PC-9 (cell line): ENCODE measurements at regions of chr2 and their contacts with region 1.

Region 1: DNA sequence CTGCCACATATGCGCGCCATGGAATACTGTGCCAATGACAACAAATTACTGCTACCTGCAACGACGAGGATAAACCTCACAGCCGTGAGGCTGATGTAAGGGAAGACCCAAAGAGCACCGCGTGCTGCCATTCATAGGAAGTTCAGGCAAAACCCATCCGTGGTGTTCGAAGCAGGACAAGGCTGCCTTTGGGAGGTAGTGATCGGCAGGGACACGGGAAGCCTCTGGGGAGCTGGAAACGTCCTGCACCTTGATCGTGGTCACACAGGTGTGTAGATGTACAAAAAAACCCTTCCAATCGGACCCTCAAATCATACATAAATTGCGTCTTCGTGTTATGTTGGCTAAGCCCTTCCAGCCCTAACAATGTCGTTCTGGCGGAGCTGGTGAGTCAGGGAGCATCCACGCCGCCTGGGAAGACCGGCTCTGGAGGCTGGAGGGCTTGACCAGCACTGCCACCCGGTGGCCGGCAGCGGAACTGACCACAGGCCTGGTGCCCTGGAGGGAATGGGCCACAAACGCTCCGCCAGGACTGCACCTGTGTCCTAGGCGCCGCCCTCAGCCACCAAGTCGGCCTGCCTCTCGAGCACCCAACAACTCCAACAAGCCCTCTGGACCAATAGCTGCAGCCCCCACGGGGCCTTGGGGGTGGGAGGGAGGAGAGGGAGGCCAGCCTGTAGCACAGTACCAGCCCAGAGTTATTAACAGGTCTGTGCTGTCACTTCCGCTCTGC is 4.1 kb upstream of the NEURL3 start:
- DNase-seq: peak; percentile 82 to 94
- H3K4me3 ChIP-seq: no peak overlapping the region
- H3K27ac ChIP-seq: no peak overlapping the region
- H3K4me1 ChIP-seq: peaks cover 40% of the 10 kb centered on the region
- H3K27me3 ChIP-seq: no peaks in the 10 kb centered on the region
- CTCF ChIP-seq: peak; percentile 100

Region 2: GRCh38 chr2:96174251-96175144 is 334.8 kb before region 1 on chr2:
- CTCF ChIA-PET with region 1: no interaction called
- POLR2A ChIA-PET with region 1: no interaction called
- intact Hi-C with region 1: loop called (anchors 1 kb)
- DNase-seq: peak; percentile 55 to 82
- H3K4me3 ChIP-seq: no peak overlapping the region
- H3K27ac ChIP-seq: no peak overlapping the region
- H3K4me1 ChIP-seq: no peaks in the 10 kb centered on the region
- H3K27me3 ChIP-seq: no peaks in the 10 kb centered on the region
- CTCF ChIP-seq: peak; percentile 98

Region 3: DNA sequence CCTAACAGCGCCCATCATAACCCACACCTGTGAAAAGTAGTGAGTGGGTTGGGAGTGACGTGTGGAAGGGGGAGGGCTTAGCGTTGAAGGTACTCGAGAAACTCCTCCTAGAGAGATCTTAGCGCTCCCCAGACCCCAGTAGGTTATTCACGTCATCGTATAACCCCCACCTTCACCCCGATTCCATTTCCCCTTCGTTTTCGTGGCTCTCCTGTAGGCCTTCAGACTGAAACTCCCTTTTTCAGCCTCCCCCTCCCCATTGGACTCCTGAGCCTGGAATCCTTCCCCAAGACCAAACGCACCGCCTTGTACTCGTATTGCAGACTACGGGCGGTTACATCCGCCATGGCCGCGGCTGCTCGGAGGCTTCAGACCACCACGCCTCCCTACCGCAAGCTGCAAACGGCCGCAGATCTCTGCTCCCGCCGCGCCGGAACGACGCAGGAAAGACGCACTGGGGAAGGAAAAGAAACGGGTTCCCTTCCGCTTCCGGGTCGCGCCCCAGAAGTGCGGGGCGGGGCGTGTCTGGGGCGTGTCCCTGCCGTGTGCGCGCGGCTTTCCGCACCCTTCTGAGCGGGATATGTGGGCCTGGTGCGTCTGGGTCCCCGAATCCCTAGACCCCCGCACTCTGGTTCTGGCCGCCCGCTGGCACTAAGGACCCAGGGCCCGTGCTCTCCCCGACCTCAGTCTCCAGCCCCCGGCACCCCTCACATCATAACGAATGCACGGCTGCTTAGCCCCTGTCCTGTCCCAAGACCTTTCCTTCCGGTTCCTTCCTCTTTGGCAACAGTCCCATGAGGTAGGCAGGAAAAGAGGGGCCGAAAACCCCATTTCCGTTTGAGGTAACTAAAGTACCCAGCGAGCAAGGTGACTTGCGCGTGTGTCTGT is 203.9 kb before region 1 on chr2 and contains the start of gene SNRNP200:
- CTCF ChIA-PET with region 1: no interaction called
- POLR2A ChIA-PET with region 1: no interaction called
- intact Hi-C with region 1: loop called (anchors 1 kb)
- DNase-seq: peak; percentile 84 to 88
- H3K4me3 ChIP-seq: peak within 1 kb of the TSS; percentile 86
- H3K27ac ChIP-seq: peak within 1 kb of the TSS; percentile 51
- H3K4me1 ChIP-seq: peaks cover 21% of the 10 kb centered on the region
- H3K27me3 ChIP-seq: no peaks in the 10 kb centered on the region
- CTCF ChIP-seq: no peak
- total RNA-seq, gene SNRNP200: 214 and 229 TPM in 2 replicates

Region 4: GRCh38 chr2:96389736-96390135 is 119.5 kb before region 1 on chr2:
- CTCF ChIA-PET with region 1: interaction called, 13 read pairs
- POLR2A ChIA-PET with region 1: no interaction called
- intact Hi-C with region 1: no loop called
- DNase-seq: no peak
- H3K4me3 ChIP-seq: no peak overlapping the region
- H3K27ac ChIP-seq: no peak overlapping the region
- H3K4me1 ChIP-seq: no peaks in the 10 kb centered on the region
- H3K27me3 ChIP-seq: no peaks in the 10 kb centered on the region
- CTCF ChIP-seq: no peak

Region 5: GRCh38 chr2:96449637-96450036 is 59.6 kb before region 1 on chr2:
- CTCF ChIA-PET with region 1: interaction called, 3 read pairs
- POLR2A ChIA-PET with region 1: no interaction called
- intact Hi-C with region 1: loop called (anchors 1 kb)
- DNase-seq: peak; percentile 60 to 69
- H3K4me3 ChIP-seq: no peak overlapping the region
- H3K27ac ChIP-seq: no peak overlapping the region
- H3K4me1 ChIP-seq: peaks cover 13% of the 10 kb centered on the region
- H3K27me3 ChIP-seq: no peaks in the 10 kb centered on the region
- CTCF ChIP-seq: no peak